ENCODE measurements at regions of chr6 and their contacts with region 1.

Region 1: GRCh38 chr6:29942275-29943052 is at the start of gene HLA-A:
- DNase-seq: peak; percentile 76 to 97 (median 92)
- ATAC-seq: peak; percentile 91
- H3K4me3 ChIP-seq: peak within 1 kb of the TSS; percentile 98
- H3K4me3 Mint-ChIP-seq: peak within 1 kb of the TSS; percentile 87 to 99 (median 97)
- H3K27ac ChIP-seq: peak within 1 kb of the TSS; percentile 99
- H3K27ac Mint-ChIP-seq: peak within 1 kb of the TSS; percentile 99 to 100 (median 100)
- H3K4me1 ChIP-seq: peaks cover 24 to 35% of the 10 kb centered on the region in 2 donors
- H3K4me1 Mint-ChIP-seq: peaks cover 32 to 52% (median 47%) of the 10 kb centered on the region in 7 donors
- H3K27me3 ChIP-seq: no peaks in the 10 kb centered on the region
- H3K27me3 Mint-ChIP-seq: peaks cover 0 to 6% (median 0%) of the 10 kb centered on the region in 5 donors
- total RNA-seq, gene HLA-A: 1,540 to 2,258 (median 1,836) TPM

Region 2: DNA sequence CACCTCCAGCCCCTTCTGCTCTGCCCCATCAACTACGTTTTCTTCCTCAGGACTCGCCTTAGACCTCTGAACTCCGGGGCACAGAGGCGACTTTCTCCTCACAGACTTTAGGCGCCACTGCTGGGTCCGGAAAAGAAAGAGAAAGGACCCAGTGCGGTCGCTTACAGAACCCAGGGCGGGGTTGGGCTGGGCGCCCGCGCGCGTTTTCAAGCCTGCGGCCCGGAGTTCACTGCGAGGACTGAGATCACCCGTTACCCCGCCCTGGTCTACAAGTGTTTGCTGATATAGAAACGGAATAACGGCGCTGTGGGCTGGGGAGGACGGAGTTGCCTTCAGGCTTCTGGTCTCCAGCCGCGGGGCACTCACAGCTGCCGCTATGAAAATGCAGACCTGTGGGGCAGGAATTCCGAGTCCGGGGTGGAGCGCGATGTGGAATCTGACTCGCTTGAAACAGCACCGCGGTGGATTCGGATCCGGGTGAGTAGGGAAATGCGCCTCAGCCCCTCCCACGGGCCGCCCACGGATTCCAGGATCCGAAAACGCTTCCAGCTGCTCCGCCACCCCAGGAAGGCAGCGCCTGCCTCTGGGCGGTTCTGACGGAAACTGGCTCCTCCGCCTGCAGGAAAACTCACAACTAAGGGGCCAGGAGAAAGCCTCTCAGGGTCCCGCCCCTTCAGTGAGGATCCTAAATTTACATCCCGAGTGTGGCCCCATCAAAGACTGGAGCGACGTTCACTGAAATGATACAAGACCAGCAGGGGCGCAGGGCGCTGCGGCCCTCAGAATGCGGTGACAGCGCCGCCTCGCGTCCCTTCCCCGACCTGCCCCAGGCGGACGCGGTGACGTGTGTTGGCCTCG is 189.8 kb before region 1 on chr6:
- CTCF ChIA-PET with region 1: no interaction called
- POLR2A ChIA-PET with region 1: no interaction called
- intact Hi-C with region 1: loop called in 1 of 2 experiments (anchors 5 kb)
- DNase-seq: peak; percentile 69 to 86 (median 77)
- ATAC-seq: peak; percentile 87
- H3K4me3 ChIP-seq: peak overlapping the region; percentile 99
- H3K4me3 Mint-ChIP-seq: peak overlapping the region; percentile 85 to 97 (median 93)
- H3K27ac ChIP-seq: peak overlapping the region; percentile 69
- H3K27ac Mint-ChIP-seq: peak overlapping the region; percentile 16 to 96 (median 88)
- H3K4me1 ChIP-seq: peaks cover 10 to 16% of the 10 kb centered on the region in 2 donors
- H3K4me1 Mint-ChIP-seq: peaks cover 24 to 54% (median 48%) of the 10 kb centered on the region in 7 donors
- H3K27me3 ChIP-seq: no peaks in the 10 kb centered on the region
- H3K27me3 Mint-ChIP-seq: peaks cover 0 to 18% (median 0%) of the 10 kb centered on the region in 5 donors

Region 3: DNA sequence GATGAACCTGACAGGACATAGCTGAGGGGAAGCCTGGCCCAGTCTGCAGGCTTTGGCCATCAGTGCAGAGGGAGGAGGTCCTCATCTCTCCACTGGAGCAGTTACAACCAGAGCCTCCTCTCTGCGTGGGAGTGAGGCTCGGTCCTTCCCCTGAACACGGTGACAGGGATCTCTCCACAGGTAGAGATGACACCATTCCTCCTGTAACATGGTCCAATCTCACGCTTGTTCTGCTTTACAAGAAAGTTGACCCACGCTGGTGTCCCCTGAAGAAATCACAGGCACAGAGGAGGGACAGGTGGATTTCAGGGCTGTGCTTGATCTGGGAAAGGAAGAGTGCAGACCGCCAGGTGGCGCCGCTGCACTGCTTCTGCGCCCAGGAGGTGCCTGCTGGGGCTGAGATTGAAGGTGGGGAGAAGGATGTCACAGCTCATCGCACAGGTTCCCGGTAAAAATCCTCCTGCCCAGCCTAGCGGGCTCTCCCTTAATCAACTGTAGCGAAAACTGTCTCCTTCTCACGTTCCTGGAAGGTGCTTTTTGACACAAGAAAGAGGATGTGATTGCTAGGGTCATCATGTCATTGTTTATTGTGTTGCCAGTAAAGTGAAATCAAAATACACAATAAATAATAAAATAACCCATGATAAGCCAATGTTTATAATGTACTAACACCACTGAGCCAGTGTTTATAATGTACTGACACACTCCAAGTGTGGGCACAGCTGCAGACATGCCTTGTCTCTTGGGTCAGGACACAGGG is 94.4 kb before region 1 on chr6:
- CTCF ChIA-PET with region 1: interaction called, 4 read pairs
- POLR2A ChIA-PET with region 1: interaction called, 7 read pairs
- intact Hi-C with region 1: loop called in 1 of 2 experiments (anchors 1 kb)
- DNase-seq: peak; percentile 71 to 87 (median 80)
- ATAC-seq: peak; percentile 90
- H3K4me3 ChIP-seq: no peak overlapping the region
- H3K4me3 Mint-ChIP-seq: peak overlapping the region in 5 of 10 donors; percentile 5 to 49 (median 16)
- H3K27ac ChIP-seq: no peak overlapping the region
- H3K27ac Mint-ChIP-seq: peak overlapping the region in 1 of 9 donors; percentile 14
- H3K4me1 ChIP-seq: no peaks in the 10 kb centered on the region
- H3K4me1 Mint-ChIP-seq: peaks cover 0 to 24% (median 13%) of the 10 kb centered on the region in 7 donors
- H3K27me3 ChIP-seq: peaks cover 9 to 13% of the 10 kb centered on the region in 2 donors
- H3K27me3 Mint-ChIP-seq: peaks cover 54 to 73% (median 67%) of the 10 kb centered on the region in 5 donors

Region 4: GRCh38 chr6:29926413-29927274 is 15.8 kb before region 1 on chr6:
- CTCF ChIA-PET with region 1: interaction called, 4 read pairs
- POLR2A ChIA-PET with region 1: interaction called, 35 read pairs
- intact Hi-C with region 1: loop called (anchors 1 kb)
- DNase-seq: peak in 8 of 9 donors; percentile 40 to 90 (median 78)
- ATAC-seq: peak; percentile 96
- H3K4me3 ChIP-seq: peak overlapping the region; percentile 68
- H3K4me3 Mint-ChIP-seq: peak overlapping the region in 9 of 10 donors; percentile 83 to 97 (median 94)
- H3K27ac ChIP-seq: peak overlapping the region; percentile 95
- H3K27ac Mint-ChIP-seq: peak overlapping the region in 8 of 9 donors; percentile 90 to 99 (median 97)
- H3K4me1 ChIP-seq: peaks cover 4 to 15% of the 10 kb centered on the region in 2 donors
- H3K4me1 Mint-ChIP-seq: peaks cover 1 to 51% (median 15%) of the 10 kb centered on the region in 7 donors
- H3K27me3 ChIP-seq: no peaks in the 10 kb centered on the region
- H3K27me3 Mint-ChIP-seq: peaks cover 0 to 3% (median 0%) of the 10 kb centered on the region in 5 donors

Region 5: DNA sequence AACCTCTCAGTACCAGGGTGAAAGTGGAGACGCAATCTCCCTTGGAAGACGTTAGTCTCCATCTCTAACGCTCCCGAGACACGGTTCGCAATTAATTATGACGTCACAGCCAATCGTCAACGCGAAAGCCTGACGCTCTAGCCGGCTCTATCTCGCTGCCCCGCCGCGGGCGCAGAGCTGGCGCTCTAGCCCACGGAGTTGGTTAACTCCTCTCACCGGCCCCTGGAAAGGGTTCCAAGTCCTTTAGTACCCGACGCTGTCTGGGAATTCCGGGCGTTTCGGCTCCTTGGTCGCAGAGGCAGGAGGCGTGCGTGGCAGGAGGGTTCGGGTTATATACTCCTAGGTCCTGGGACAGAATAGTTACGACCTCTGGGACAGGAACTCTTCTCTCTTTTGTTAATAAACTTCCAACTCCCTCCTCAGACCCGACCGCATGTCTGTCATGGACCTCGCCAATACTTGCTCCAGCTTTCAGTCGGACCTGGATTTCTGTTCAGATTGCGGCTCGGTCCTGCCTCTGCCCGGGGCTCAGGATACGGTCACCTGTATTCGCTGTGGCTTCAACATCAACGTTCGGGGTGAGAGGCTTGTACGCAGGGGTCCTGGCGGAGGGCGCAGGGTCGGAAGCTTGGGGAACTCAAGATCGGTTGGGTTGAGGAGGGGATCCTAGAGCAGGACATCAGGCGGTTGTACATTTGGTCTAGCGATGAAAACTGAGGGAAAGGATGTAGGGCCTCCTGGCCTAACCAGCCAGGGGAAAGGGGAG is 118.8 kb after region 1 on chr6 and contains the start of gene POLR1H:
- CTCF ChIA-PET with region 1: no interaction called
- POLR2A ChIA-PET with region 1: interaction called, 14 read pairs
- intact Hi-C with region 1: loop called (anchors 1 to 2 kb)
- DNase-seq: peak; percentile 69 to 93 (median 86)
- ATAC-seq: peak; percentile 93
- H3K4me3 ChIP-seq: peak within 1 kb of the TSS; percentile 95
- H3K4me3 Mint-ChIP-seq: peak within 1 kb of the TSS; percentile 93 to 99 (median 98)
- H3K27ac ChIP-seq: peak within 1 kb of the TSS; percentile 92
- H3K27ac Mint-ChIP-seq: peak within 1 kb of the TSS; percentile 95 to 99 (median 99)
- H3K4me1 ChIP-seq: peaks cover 24 to 26% of the 10 kb centered on the region in 2 donors
- H3K4me1 Mint-ChIP-seq: peaks cover 17 to 63% (median 55%) of the 10 kb centered on the region in 7 donors
- H3K27me3 ChIP-seq: no peaks in the 10 kb centered on the region
- H3K27me3 Mint-ChIP-seq: no peaks in the 10 kb centered on the region
- total RNA-seq, gene POLR1H: 27.3 to 66.8 (median 45.0) TPM

Region 6: DNA sequence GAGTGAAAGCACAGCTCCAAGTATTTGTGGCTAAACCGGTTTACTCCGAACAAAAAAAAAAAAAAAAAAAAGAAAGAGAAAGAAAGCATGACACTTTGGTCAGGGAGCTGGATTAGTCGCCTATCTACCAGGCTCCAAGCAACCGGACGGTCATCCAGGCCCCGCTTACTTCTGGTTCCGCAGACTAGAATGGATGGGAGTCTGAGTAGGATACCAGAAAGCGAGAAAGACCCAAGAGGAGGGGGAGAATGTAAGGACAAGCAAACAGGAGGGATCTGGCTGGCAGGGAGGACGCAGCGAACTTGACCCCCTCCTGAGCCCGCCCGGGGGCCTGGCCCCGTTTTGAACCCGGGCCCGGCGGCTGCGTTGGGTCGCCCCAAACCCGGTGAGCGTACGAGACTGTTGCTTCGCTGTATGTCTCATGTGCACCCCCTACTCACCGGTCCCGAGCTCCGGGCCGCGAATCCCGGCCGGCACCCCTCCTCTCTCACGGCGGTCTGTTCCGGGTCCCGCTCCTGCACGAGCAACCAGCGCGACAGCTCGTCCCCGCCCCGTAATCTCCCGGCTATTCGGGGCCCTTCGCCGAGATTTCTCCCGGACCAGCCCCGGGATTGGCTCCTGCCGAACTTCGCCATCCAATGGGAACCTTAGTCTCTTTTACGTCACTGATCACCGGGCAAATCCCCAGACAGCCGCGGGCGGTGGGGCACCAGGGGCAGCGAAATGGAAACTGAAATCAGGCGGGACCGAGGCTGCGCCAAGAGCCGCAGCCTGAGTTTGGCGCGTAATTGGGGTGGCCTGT is 270.6 kb after region 1 on chr6 and contains the start of gene TRIM26:
- CTCF ChIA-PET with region 1: no interaction called
- POLR2A ChIA-PET with region 1: no interaction called
- intact Hi-C with region 1: loop called (anchors 1 to 5 kb)
- DNase-seq: peak; percentile 88 to 99 (median 97)
- ATAC-seq: peak; percentile 94
- H3K4me3 ChIP-seq: peak within 1 kb of the TSS; percentile 83
- H3K4me3 Mint-ChIP-seq: peak within 1 kb of the TSS; percentile 89 to 100 (median 96)
- H3K27ac ChIP-seq: peak within 1 kb of the TSS; percentile 99
- H3K27ac Mint-ChIP-seq: peak within 1 kb of the TSS; percentile 96 to 100 (median 99)
- H3K4me1 ChIP-seq: peaks cover 32 to 39% of the 10 kb centered on the region in 2 donors
- H3K4me1 Mint-ChIP-seq: peaks cover 47 to 62% (median 52%) of the 10 kb centered on the region in 7 donors
- H3K27me3 ChIP-seq: no peaks in the 10 kb centered on the region
- H3K27me3 Mint-ChIP-seq: peaks cover 0 to 5% (median 0%) of the 10 kb centered on the region in 5 donors
- total RNA-seq, gene TRIM26: 40.1 to 73.1 (median 49.1) TPM

Measured in naive thymus-derived CD4-positive, alpha-beta T cell (primary cell).